ENCODE measurements at regions of chr15 and their contacts with region 1.

Region 1: DNA sequence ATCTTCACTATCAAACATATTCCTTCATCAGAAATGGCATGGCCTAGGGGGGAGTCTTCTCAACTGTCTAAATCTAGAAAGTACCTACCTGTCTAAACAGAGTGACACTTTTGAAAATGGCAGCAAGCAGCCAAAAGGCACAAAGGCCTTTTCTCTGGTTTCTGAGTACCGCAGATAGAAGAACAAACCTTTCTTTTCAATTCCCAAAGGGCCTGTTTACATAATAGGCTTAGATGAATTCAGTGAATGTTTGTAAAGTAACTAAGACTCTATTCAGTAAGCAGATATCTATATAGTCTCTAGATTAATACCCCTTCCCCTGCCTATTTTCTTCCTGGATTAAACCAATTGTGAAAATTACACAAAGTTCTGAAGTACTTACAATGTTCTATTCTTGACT is 7.1 kb downstream of the MYEF2 start:
- DNase-seq: no peak
- H3K4me3 ChIP-seq: no peak overlapping the region
- H3K27ac ChIP-seq: no peak overlapping the region
- H3K27me3 ChIP-seq: no peaks in the 10 kb centered on the region
- CTCF ChIP-seq: no peak

Region 2: DNA sequence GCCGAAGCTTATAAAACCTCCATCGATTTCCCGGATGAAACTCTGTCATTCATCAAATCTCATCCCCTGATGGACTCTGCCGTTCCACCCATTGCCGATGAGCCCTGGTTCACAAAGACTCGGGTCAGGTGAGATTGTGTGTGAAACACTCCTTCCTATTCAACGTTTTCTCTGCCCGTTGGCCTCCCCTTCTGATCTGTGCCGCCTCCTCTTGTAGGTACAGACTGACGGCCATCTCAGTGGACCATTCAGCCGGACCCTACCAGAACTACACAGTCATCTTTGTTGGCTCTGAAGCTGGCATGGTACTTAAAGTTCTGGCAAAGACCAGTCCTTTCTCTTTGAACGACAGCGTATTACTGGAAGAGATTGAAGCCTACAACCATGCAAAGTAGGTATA is 406.3 kb before region 1 on chr15:
- intact Hi-C with region 1: loop called in 1 of 2 experiments (anchors 5 kb)
- DNase-seq: no peak
- H3K4me3 ChIP-seq: peak overlapping the region in 3 of 59 donors; percentile 8 to 35 (median 29)
- H3K27ac ChIP-seq: peak overlapping the region in 53 of 59 donors; percentile 3 to 81 (median 57)
- H3K27me3 ChIP-seq: no peaks in the 10 kb centered on the region
- CTCF ChIP-seq: no peak

Region 3: GRCh38 chr15:47887241-47887800 is 283.7 kb before region 1 on chr15:
- intact Hi-C with region 1: no loop called
- DNase-seq: peak in 1 of 10 donors; percentile 20
- H3K4me3 ChIP-seq: no peak overlapping the region
- H3K27ac ChIP-seq: no peak overlapping the region
- H3K27me3 ChIP-seq: peaks cover 0 to 9% (median 0%) of the 10 kb centered on the region in 45 donors
- CTCF ChIP-seq: no peak